ENCODE measurements at regions of chr6 and their contacts with region 1.

Region 1: GRCh38 chr6:2988426-2989331 is 11.0 kb upstream of the NQO2 start:
- DNase-seq: peak; percentile 81
- H3K4me3 Mint-ChIP-seq: peak overlapping the region; percentile 87
- H3K27ac Mint-ChIP-seq: peak overlapping the region; percentile 95
- H3K4me1 Mint-ChIP-seq: peaks cover 27% of the 10 kb centered on the region
- H3K27me3 Mint-ChIP-seq: peaks cover 5% of the 10 kb centered on the region

Region 2: GRCh38 chr6:2791124-2791974 is 197.3 kb before region 1 on chr6:
- CTCF ChIA-PET with region 1: interaction called, 31 read pairs
- POLR2A ChIA-PET with region 1: interaction called, 11 read pairs
- DNase-seq: peak; percentile 71
- H3K4me3 Mint-ChIP-seq: no peak overlapping the region
- H3K27ac Mint-ChIP-seq: peak overlapping the region; percentile 57
- H3K4me1 Mint-ChIP-seq: peaks cover 41% of the 10 kb centered on the region
- H3K27me3 Mint-ChIP-seq: no peaks in the 10 kb centered on the region

Region 3: GRCh38 chr6:2853761-2854395 is 134.8 kb before region 1 on chr6:
- CTCF ChIA-PET with region 1: interaction called, 9 read pairs
- POLR2A ChIA-PET with region 1: interaction called, 23 read pairs
- DNase-seq: peak; percentile 85
- H3K4me3 Mint-ChIP-seq: peak overlapping the region; percentile 70
- H3K27ac Mint-ChIP-seq: peak overlapping the region; percentile 100
- H3K4me1 Mint-ChIP-seq: peaks cover 70% of the 10 kb centered on the region
- H3K27me3 Mint-ChIP-seq: no peaks in the 10 kb centered on the region

Region 4: GRCh38 chr6:2952557-2953095 is 36.1 kb before region 1 on chr6:
- CTCF ChIA-PET with region 1: interaction called, 20 read pairs
- POLR2A ChIA-PET with region 1: interaction called, 4 read pairs
- DNase-seq: peak; percentile 48
- H3K4me3 Mint-ChIP-seq: no peak overlapping the region
- H3K27ac Mint-ChIP-seq: no peak overlapping the region
- H3K4me1 Mint-ChIP-seq: no peaks in the 10 kb centered on the region
- H3K27me3 Mint-ChIP-seq: peaks cover 13% of the 10 kb centered on the region

Region 5: DNA sequence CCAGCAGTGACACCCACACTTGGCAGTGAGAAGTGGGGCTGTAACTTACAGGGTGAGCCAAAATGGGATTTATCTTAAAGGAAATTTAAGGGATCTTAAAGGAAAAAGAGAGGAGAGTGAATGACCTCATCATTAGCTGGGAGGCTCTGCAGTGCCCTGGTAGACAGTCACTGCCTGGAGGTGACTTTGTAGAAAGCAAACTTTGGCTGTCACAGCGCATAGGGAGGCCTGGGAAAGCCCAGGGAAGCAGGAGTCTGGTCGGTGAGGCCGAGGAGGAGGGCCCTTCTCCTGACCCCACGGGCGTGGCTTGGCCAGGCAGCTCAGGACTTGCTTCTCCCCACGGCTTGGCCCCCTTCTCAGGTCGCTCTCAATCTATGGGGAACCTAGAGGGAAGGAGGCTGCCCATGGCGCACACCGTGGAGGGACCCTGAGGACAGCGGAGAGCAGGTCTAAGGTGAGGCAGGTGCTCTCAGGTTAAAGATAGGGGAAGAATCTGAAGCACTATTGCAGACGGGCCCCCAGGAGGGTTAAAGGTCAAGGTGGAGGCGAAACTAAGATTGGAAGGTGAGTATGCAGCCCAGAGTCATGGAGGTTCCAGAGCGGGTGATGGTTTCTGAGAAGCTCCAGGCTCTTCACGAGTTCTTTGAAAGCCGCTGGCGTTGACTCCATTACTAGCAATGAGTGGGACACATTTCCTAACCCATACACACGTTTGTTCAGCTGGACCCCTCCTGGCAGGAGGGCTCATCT is 64.0 kb after region 1 on chr6:
- CTCF ChIA-PET with region 1: interaction called, 12 read pairs
- POLR2A ChIA-PET with region 1: interaction called, 17 read pairs
- DNase-seq: no peak
- H3K4me3 Mint-ChIP-seq: peak overlapping the region; percentile 72
- H3K27ac Mint-ChIP-seq: peak overlapping the region; percentile 51
- H3K4me1 Mint-ChIP-seq: peaks cover 33% of the 10 kb centered on the region
- H3K27me3 Mint-ChIP-seq: peaks cover 15% of the 10 kb centered on the region

Region 6: DNA sequence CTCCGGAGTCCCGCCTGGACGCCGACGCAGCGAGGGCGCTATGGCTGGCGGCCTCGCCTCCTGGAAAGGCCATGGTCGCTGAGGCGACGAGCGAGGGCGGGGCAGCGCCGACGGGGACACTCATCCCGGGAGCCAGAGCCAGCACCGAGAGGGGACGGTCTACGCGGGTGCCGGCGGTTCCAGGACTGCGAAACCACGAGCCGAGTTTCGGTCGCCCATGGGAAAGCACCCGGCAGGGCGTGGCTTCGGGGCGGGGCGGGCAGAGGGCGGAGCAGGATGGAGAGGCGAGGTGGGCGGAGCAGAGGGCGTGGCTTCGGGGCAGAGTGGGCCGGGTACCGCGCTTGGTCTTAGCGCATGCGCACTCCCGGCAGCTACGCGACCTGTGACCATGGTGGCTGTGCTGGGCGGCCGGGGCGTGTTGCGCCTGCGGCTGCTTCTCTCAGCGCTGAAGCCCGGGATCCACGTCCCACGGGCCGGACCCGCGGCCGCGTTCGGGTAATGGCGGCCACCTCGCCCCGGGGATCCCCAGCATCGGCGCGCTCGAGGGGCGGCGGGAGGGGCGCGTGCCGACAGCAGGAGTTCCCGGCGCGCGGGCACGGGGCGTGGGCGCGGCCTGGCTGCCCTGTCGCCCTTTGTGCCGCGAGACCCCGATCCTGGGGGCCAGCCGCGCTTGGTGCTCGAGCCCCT is 129.8 kb after region 1 on chr6 and contains the start of gene BPHL:
- CTCF ChIA-PET with region 1: no interaction called
- POLR2A ChIA-PET with region 1: interaction called, 10 read pairs
- DNase-seq: peak; percentile 99
- H3K4me3 Mint-ChIP-seq: peak within 1 kb of the TSS; percentile 80
- H3K27ac Mint-ChIP-seq: peak within 1 kb of the TSS; percentile 77
- H3K4me1 Mint-ChIP-seq: peaks cover 23% of the 10 kb centered on the region
- H3K27me3 Mint-ChIP-seq: peaks cover 2% of the 10 kb centered on the region
- total RNA-seq, gene BPHL: 7.3 to 9.2 TPM